ENCODE measurements at regions of chr12 and their contacts with region 1.

Region 1: DNA sequence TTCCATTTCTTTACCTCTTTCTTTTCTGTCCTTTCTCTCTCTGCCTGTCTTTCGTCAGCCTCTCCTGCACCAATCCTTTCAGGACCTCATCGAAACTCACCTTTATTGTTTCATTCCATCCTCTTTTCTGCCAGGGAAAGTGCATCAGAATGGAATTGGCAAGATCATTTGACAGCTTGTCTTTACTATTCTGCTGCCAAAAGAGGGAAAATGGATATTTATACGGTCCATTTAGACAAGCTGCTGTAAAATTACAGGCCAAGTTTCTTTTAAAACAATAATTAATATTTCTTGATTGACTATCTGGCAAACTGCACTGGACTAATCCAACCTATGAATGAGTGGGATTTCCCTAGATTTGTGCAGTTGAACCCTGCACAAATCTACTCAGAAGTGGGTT is 7.6 kb upstream of the SRGAP1 start:
- DNase-seq: no peak
- ATAC-seq: no peak
- H3K4me3 ChIP-seq: no peak overlapping the region
- H3K27ac ChIP-seq: no peak overlapping the region
- H3K4me1 ChIP-seq: no peaks in the 10 kb centered on the region
- H3K27me3 ChIP-seq: no peaks in the 10 kb centered on the region

Region 2: DNA sequence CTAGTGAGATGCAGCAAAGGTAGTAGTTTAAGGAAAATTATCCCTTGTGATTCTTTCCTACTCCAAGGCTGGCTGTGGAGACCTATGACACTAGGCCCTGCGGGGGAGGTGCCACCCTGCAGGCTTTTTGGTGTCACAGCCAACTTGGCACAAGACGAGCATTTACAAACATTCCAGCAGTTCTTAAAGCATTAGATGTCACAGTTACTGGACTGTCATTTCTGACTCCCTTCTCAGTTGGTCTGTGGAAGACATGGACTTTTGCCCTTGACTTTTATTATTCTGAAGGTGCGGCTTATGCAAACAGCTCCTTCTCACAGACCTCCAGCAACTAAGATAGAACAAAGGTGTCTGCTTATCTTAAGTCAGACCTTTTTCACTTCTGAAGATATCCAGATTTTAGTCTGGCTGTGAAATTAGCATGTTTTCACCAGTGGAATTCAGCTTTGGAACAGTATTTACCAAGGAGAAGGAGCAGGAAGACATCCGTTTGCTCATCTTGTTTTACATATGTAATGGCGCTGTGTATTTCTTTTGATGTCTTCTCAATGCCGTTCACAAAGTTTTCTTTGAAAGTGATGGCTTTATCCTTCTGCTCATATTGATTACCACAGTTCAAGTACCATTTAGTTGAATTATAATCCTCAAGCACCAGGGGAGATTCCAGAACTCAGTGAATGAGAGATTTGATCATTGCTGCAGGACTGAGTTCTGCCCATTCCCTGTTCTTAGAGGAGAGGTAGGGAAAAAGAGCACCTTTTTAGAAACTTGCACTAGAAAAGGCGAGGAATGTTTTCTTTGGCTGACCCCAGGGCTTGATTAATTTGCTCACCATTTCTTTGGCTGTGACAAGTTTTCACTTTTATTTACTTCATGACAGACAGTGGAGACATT is 25.5 kb after region 1 on chr12:
- intact Hi-C with region 1: no loop called
- DNase-seq: no peak
- ATAC-seq: no peak
- H3K4me3 ChIP-seq: no peak overlapping the region
- H3K27ac ChIP-seq: no peak overlapping the region
- H3K4me1 ChIP-seq: no peaks in the 10 kb centered on the region
- H3K27me3 ChIP-seq: no peaks in the 10 kb centered on the region

Region 3: DNA sequence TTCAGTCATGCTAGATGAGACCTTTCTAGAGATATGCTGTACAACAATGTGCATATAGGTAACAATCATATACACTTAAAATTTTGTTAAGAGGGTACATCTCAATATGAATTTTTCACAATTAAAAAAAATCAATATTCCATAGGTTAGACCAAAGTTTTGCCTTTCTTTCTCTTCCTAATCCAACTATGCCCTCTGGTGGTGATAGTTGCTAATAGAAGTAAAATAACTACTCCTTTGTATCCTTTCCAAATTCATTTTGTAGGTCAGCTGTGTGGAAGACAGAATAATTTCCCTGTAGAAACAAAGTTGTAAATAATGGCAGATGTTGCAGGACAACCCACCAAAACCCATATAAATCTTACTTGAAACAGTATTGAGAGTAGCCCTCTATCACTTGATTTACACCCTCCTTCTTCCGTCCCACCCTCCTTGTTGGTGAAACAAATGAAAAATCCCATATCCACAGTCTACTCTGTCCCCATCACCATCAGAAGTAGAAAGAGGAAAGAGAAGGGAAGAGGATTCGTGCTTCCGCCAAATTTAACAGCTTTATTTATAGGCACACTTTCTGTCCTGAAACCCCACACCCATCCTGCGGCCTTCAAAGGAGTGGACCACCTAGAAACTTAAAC is 419.3 kb after region 1 on chr12:
- intact Hi-C with region 1: loop called (anchors 2 kb)
- DNase-seq: no peak
- ATAC-seq: no peak
- H3K4me3 ChIP-seq: no peak overlapping the region
- H3K27ac ChIP-seq: no peak overlapping the region
- H3K4me1 ChIP-seq: no peaks in the 10 kb centered on the region
- H3K27me3 ChIP-seq: no peaks in the 10 kb centered on the region

Measured in aorta (tissue), 5 donors.